BJ (cell line): ENCODE measurements at regions of chr6 and their contacts with region 1.

Region 1: DNA sequence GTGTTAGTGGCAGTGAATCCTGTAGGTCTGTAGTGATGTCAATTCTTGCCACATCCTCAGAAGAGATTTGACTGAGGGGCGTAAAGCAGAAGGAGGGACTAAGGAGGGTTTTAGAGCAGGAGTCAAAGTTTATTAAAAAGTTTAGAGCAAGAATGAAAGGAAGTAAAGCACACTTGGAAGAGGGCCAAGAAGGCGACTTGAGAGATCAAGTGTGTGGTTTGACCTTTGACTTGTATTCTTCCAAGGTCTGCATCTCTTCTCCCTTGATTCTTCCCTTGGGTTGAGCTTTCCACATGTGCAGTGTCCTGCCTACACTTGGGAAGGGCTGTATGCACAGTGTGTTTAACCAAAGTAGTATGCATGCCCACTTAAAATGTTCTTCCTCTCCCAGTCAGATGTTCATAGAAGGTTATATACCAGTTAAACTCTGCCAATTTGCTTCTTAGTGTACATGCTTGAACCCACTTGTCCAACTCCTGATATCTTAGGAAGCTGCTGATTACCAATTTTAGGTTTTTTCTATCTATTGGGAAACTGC is 627.6 kb downstream of the MMUT start:
- DNase-seq: no peak
- H3K4me3 ChIP-seq: no peak overlapping the region
- H3K27me3 ChIP-seq: no peaks in the 10 kb centered on the region
- CTCF ChIP-seq: no peak

Region 2: GRCh38 chr6:49001856-49002541 is 166.5 kb after region 1 on chr6:
- CTCF ChIA-PET with region 1: no interaction called
- POLR2A ChIA-PET with region 1: interaction called, 21 read pairs
- DNase-seq: peak; percentile 4
- H3K4me3 ChIP-seq: no peak overlapping the region
- H3K27me3 ChIP-seq: no peaks in the 10 kb centered on the region
- CTCF ChIP-seq: no peak